H1 (cell line): ENCODE measurements at regions of chrX and their contacts with region 1.

Region 1: GRCh38 chrX:148530464-148531077 is 30.2 kb downstream of the AFF2 start:
- DNase-seq: no peak
- H3K4me3 ChIP-seq: no peak overlapping the region
- H3K27ac ChIP-seq: no peak overlapping the region
- H3K4me1 ChIP-seq: no peaks in the 10 kb centered on the region
- H3K27me3 ChIP-seq: no peaks in the 10 kb centered on the region
- CTCF ChIP-seq: peak in 1 of 3 experiments; percentile 30; a peak in 2 of 4 replicates
- EP300 ChIP-seq: no peak
- POLR2A ChIP-seq: no peak
- RAD21 ChIP-seq: no peak

Region 2: DNA sequence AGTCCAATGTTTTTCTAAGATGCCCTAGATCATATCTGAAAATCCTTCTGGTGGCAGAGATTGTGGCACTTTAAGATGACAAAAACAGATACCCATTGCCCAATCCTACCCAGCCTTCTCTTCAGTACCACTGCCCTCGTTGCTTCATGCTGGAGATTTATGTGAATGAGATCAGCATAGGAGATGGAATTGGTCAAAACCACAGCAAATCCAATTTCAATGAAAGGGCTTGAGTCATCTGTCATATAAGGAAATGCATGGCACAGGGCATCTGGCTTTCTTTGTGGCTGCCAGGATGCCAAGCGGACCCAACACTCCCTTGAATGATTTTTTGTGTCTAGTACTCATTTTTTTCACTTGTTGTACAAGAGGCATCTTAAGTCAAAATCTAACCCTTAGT is 13.4 kb before region 1 on chrX:
- CTCF ChIA-PET with region 1: interaction called, 10 read pairs
- POLR2A ChIA-PET with region 1: no interaction called
- DNase-seq: no peak
- H3K4me3 ChIP-seq: no peak overlapping the region
- H3K27ac ChIP-seq: no peak overlapping the region
- H3K4me1 ChIP-seq: peaks cover 0 to 2% (median 0%) of the 10 kb centered on the region in 4 experiments; a peak in 1 of 7 replicates
- H3K27me3 ChIP-seq: no peaks in the 10 kb centered on the region
- CTCF ChIP-seq: no peak
- EP300 ChIP-seq: no peak
- POLR2A ChIP-seq: no peak
- RAD21 ChIP-seq: no peak

Region 3: GRCh38 chrX:148541544-148541983 is 11.0 kb after region 1 on chrX:
- CTCF ChIA-PET with region 1: interaction called, 31 read pairs
- POLR2A ChIA-PET with region 1: no interaction called
- DNase-seq: no peak
- H3K4me3 ChIP-seq: no peak overlapping the region
- H3K27ac ChIP-seq: no peak overlapping the region
- H3K4me1 ChIP-seq: peaks cover 0 to 7% (median 2%) of the 10 kb centered on the region in 4 experiments; a peak in 3 of 7 replicates
- H3K27me3 ChIP-seq: no peaks in the 10 kb centered on the region; a peak in 1 of 7 replicates
- CTCF ChIP-seq: no peak
- EP300 ChIP-seq: no peak
- POLR2A ChIP-seq: no peak
- RAD21 ChIP-seq: no peak

Region 4: GRCh38 chrX:148588649-148589310 is 58.2 kb after region 1 on chrX:
- CTCF ChIA-PET with region 1: no interaction called
- POLR2A ChIA-PET with region 1: no interaction called
- DNase-seq: no peak
- H3K4me3 ChIP-seq: no peak overlapping the region
- H3K27ac ChIP-seq: no peak overlapping the region
- H3K4me1 ChIP-seq: no peaks in the 10 kb centered on the region; a peak in 1 of 7 replicates
- H3K27me3 ChIP-seq: no peaks in the 10 kb centered on the region
- CTCF ChIP-seq: no peak
- EP300 ChIP-seq: no peak
- POLR2A ChIP-seq: no peak
- RAD21 ChIP-seq: 0 out of 4 replicates have a peak, but pooled peaks of 1 of the 2 experiments have one; percentile 0